Activated CD8-positive, alpha-beta memory T cell treated with anti-CD3 and anti-CD28 coated beads, Interleukin-2, amount 10 ng/mL, durations not matched to agents 7 days and 5 days (primary cell): ENCODE measurements at regions of chr19 and their contacts with region 1.

Region 1: GRCh38 chr19:11535792-11536595 is 2.7 kb upstream of the CNN1 start:
- DNase-seq: peak; percentile 91
- ATAC-seq: peak; percentile 91
- H3K4me3 Mint-ChIP-seq: peak overlapping the region; percentile 14
- H3K27ac Mint-ChIP-seq: no peak overlapping the region
- H3K4me1 Mint-ChIP-seq: peaks cover 27% of the 10 kb centered on the region
- H3K27me3 Mint-ChIP-seq: peaks cover 21% of the 10 kb centered on the region

Region 2: GRCh38 chr19:11435058-11435832 is 100.7 kb before region 1 on chr19 and contains the starts of genes ODAD3 and PRKCSH:
- CTCF ChIA-PET with region 1: no interaction called
- DNase-seq: peak; percentile 99
- ATAC-seq: peak; percentile 95
- H3K4me3 Mint-ChIP-seq: peak within 1 kb of the TSS; percentile 100
- H3K27ac Mint-ChIP-seq: peak within 1 kb of the TSS; percentile 96
- H3K4me1 Mint-ChIP-seq: peaks cover 25% of the 10 kb centered on the region
- H3K27me3 Mint-ChIP-seq: peaks cover 4% of the 10 kb centered on the region
- total RNA-seq, gene ODAD3: 0.15 to 0.54 TPM
- total RNA-seq, gene PRKCSH: 278 to 306 TPM

Region 3: GRCh38 chr19:11460207-11460606 is 75.8 kb before region 1 on chr19:
- CTCF ChIA-PET with region 1: no interaction called
- DNase-seq: no peak
- ATAC-seq: no peak
- H3K4me3 Mint-ChIP-seq: no peak overlapping the region
- H3K27ac Mint-ChIP-seq: no peak overlapping the region
- H3K4me1 Mint-ChIP-seq: no peaks in the 10 kb centered on the region
- H3K27me3 Mint-ChIP-seq: peaks cover 4% of the 10 kb centered on the region

Region 4: DNA sequence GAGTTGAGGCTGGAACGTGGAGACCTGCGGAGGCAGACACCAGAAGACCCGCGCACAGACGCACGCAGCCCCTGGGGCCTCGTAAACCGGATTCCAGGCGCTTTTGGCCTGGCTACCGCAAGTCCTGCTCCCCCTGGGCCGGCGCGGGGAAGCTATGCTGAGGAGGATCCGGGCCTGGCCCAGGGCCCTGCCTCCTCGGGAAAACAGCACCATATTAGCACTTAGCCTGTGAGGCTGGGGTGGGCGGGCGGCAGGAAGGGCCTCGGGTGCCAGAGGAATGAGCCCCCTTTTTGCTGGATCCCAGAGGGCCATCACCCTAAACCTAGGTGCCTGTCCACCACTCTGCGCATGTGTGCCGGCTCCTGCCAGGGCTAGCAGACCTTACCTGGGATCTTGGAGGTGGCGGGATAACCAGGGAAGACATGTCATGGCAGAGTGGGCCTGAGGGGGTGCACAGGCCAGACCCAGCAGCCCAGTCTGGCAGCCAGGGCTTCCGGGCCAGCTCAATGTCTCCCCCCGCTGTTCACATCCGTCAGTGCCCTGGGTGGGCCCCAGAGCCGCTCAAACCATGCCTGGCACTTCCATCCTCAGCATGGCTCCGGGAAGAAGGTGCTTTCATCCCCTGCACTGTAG is 15.7 kb after region 1 on chr19:
- CTCF ChIA-PET with region 1: interaction called, 24 read pairs
- DNase-seq: no peak
- ATAC-seq: no peak
- H3K4me3 Mint-ChIP-seq: no peak overlapping the region
- H3K27ac Mint-ChIP-seq: no peak overlapping the region
- H3K4me1 Mint-ChIP-seq: peaks cover 29% of the 10 kb centered on the region
- H3K27me3 Mint-ChIP-seq: no peaks in the 10 kb centered on the region

Region 5: DNA sequence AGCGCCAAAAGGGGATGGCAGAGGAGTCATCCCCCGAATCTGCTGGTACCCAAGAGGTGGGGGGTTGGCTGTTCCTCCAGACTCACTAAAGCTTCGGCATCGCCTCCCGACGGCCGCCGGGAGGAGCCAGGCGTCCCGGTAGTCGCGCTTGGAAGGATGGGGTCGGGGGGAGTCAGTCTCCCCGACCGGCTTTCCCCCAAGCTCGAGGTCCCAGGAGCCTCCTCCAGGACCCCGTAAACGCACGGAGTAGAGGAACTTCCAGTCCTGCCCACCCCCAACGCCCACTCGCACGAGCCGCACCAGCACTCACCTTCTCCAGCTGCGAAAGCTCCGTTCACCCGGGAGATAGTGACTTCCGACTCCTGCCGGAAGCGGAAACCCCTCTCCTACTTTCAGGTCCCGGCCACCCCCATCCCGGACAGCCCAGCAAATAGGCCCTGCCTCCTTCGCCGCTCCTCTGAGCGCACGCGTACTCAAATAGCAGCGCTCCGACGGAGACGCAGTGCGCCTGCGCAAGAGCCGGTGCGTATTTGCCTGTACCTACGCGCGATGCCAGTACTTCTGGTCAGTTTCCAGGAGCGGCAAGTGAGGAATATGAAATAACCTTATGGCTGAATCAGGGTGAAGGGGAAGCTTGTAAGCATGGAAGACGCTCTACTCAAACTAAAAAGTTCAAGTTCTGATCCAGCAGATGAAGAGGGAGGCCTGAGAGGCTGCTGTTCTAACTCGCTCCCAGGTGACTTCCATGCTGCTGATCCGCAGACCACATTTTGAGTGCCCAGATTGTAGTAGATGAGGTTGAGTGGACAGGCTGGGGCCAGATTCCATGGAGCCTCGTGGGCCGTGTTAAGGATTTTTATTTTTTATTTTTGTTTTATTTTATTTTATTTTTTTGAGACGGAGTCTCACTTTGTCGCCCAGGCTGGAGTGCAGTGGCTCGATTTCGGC is 23.2 kb after region 1 on chr19 and contains the start of gene ELOF1:
- CTCF ChIA-PET with region 1: interaction called, 24 read pairs
- DNase-seq: peak; percentile 99
- ATAC-seq: peak; percentile 96
- H3K4me3 Mint-ChIP-seq: peak within 1 kb of the TSS; percentile 85
- H3K27ac Mint-ChIP-seq: peak within 1 kb of the TSS; percentile 92
- H3K4me1 Mint-ChIP-seq: peaks cover 58% of the 10 kb centered on the region
- H3K27me3 Mint-ChIP-seq: no peaks in the 10 kb centered on the region
- total RNA-seq, gene ELOF1: 55.1 to 67.2 TPM

Region 6: DNA sequence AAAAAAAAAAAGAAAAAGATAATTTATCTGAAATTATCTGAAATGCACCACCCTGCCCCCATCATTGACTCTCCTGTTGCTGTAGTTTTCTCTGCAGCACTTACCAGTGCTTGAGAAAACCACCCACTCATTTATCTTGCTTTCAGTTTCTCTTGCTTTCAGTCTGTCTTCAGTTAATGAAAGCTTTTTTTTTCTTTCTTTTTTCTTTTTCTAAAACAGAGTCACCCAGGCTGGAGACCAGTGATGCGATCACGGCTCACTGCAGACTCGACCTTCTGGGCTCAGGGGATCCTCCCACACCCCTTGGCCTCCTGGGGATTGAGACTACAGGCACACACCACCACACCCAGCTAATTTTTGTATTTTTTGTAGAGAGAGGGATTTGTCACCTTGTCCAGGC is 45.7 kb after region 1 on chr19:
- CTCF ChIA-PET with region 1: interaction called, 17 read pairs
- DNase-seq: peak; percentile 75
- ATAC-seq: peak; percentile 74
- H3K4me3 Mint-ChIP-seq: peak overlapping the region; percentile 71
- H3K27ac Mint-ChIP-seq: peak overlapping the region; percentile 97
- H3K4me1 Mint-ChIP-seq: peaks cover 43% of the 10 kb centered on the region
- H3K27me3 Mint-ChIP-seq: no peaks in the 10 kb centered on the region